ENCODE measurements at regions of chr20 and their contacts with region 1.

Region 1: DNA sequence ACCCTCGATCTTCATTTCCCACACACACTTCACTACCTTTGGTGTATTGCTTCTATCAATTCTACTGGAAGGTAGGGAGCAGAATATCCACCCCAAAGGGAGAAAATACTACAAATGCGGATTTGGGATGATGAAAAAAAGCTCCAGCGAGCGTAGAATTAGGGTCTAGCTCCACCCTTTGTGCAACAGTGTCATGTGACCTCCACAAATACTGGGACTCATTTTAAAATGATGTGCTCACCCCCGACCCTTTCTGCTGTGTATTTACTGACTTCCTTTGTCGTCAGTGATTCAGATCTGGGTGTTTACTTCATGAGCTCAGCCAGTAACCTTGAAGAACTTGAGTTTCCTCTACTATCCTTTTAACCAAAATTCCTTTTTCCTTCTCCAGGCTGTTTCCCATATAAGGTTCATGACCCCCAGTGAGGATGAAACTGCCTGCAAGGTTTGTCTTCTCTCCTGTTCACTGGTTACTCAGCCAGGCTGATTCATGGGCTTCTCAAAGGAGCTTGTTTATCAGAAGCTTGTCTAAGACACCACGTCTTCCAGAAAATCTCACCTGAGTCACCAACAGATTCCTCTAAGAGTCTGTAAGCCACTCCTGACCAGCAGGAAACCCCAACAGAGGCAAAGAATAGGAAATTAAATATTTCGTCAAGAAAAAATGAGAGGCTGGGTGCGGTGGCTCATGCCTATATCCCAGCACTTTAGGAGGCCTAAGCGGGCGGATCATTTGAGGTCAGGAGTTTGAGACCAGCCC is 39.6 kb upstream of the PAX1 start:
- DNase-seq: peak; percentile 61
- H3K4me3 ChIP-seq: no peak overlapping the region
- H3K27ac ChIP-seq: no peak overlapping the region
- H3K4me1 ChIP-seq: no peaks in the 10 kb centered on the region
- H3K27me3 ChIP-seq: no peaks in the 10 kb centered on the region
- CTCF ChIP-seq: no peak

Region 2: DNA sequence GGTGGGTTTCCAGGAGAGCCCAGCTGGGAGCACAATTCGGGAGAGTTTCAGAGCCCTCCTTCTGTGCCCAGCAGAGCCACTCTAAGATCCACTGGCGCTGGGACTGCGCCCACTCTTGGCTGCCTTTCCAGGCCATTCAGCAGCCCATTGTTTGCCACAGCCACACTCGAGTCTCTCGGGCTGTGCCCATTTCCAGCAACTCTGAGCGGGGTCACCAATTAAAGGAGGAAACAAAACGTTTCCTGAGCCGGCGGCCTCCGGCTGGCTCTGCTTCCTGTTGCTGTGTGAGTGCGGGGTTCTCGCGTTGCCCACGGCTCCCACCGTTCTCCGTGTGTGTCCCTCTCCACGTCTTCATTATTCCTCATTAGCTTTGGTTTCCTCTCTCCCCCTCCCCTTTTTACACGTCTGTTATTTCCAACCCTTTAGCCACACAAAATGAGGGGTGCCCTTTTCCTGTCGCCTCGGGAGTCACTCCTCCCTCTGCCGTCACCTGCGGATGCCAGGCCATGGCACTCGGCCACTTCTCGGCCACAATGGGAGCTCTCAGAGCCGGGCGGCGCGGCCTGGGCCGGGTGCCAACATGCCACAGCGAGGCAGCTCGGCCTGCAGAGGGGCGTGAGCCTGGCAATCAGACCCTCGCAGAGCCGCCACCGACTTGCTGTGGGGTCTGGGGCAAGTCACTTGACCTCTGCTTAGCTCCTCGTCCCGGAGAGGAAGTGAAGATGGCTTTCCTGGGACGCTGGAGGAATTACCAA is 57.7 kb before region 1 on chr20:
- CTCF ChIA-PET with region 1: no interaction called
- dilution Hi-C with region 1: loop called (anchors 5 kb)
- in situ Hi-C with region 1: no loop called
- intact Hi-C with region 1: no loop called
- DNase-seq: no peak
- H3K4me3 ChIP-seq: peak overlapping the region in 1 of 3 experiments; percentile 7
- H3K27ac ChIP-seq: no peak overlapping the region
- H3K4me1 ChIP-seq: no peaks in the 10 kb centered on the region
- H3K27me3 ChIP-seq: no peaks in the 10 kb centered on the region
- CTCF ChIP-seq: no peak